ENCODE measurements at regions of chr2 and their contacts with region 1.

Region 1: GRCh38 chr2:37832590-37833197 is 92.4 kb upstream of the RMDN2 start:
- DNase-seq: peak; percentile 71 to 89 (median 80)
- ATAC-seq: peak; percentile 84
- H3K4me3 ChIP-seq: no peak overlapping the region
- H3K4me3 Mint-ChIP-seq: no peak overlapping the region
- H3K27ac ChIP-seq: no peak overlapping the region
- H3K27ac Mint-ChIP-seq: no peak overlapping the region
- H3K4me1 ChIP-seq: peaks cover 10% of the 10 kb centered on the region
- H3K4me1 Mint-ChIP-seq: peaks cover 19% of the 10 kb centered on the region
- H3K27me3 ChIP-seq: no peaks in the 10 kb centered on the region
- H3K27me3 Mint-ChIP-seq: no peaks in the 10 kb centered on the region
- CTCF ChIP-seq: peak; percentile 93

Region 2: DNA sequence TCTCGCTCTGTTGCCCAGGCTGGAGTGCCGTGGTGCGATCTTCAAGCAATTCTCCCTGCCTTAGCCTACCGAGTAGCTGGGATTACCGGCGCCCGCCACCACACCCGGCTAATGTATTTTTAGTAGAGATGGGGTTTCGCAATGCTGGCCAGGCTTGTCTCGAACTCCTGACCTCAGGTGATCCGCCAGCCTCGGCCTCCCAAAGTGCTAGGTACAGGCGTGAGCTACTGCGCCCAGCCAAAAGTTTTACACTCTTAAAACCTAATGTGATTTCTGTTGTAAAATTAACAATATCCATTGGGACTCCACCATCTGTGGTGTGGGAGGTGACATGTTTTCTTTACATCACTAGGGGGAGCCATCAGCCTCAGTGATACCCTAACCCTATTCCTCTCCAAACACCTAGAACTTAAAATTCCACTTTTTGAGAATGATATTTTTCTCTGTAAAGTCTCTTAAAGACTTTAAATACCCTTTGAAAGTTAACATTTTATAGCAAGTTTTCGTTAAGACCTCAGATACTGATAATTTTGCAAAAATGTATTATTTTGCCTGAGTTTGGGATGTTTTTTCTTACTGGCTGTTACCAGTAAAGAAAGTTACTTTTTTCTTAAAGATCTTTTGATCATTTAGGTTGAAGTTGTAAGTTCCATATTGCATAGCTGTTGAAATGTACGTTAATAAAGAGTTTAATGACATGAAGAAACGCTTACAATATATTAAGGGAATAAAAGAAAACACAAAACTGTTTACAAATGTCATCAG is 664.3 kb before region 1 on chr2:
- CTCF ChIA-PET with region 1: no interaction called
- POLR2A ChIA-PET with region 1: no interaction called
- intact Hi-C with region 1: loop called in 1 of 2 experiments (anchors 2 kb)
- DNase-seq: peak in 6 of 14 experiments; percentile 6 to 66 (median 46)
- ATAC-seq: peak; percentile 85
- H3K4me3 ChIP-seq: no peak overlapping the region
- H3K4me3 Mint-ChIP-seq: no peak overlapping the region
- H3K27ac ChIP-seq: no peak overlapping the region
- H3K27ac Mint-ChIP-seq: no peak overlapping the region
- H3K4me1 ChIP-seq: no peaks in the 10 kb centered on the region
- H3K4me1 Mint-ChIP-seq: no peaks in the 10 kb centered on the region
- H3K27me3 ChIP-seq: no peaks in the 10 kb centered on the region
- H3K27me3 Mint-ChIP-seq: no peaks in the 10 kb centered on the region
- CTCF ChIP-seq: peak; percentile 71

Region 3: DNA sequence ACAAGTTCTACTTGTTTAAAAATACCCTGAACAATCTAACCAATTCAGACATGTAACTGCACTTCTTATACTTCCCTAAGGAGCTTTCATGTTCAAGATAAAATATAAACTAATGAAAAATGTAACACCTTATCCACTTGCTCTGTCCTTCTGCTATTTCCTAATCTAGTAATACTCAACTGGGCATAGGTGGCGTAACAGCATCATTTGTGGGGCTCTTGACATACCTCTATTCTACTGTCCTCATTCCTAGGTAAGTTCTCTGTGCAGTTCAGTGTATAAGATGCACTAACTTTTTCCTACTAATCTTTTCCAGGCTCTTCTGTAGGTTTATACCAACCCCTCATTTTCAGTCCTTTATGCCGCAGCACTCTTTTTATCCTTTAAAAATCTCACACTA is 544.7 kb before region 1 on chr2:
- CTCF ChIA-PET with region 1: no interaction called
- POLR2A ChIA-PET with region 1: no interaction called
- intact Hi-C with region 1: loop called in 1 of 2 experiments (anchors 5 kb)
- DNase-seq: peak in 5 of 14 experiments; percentile 3 to 37 (median 19)
- ATAC-seq: no peak
- H3K4me3 ChIP-seq: no peak overlapping the region
- H3K4me3 Mint-ChIP-seq: no peak overlapping the region
- H3K27ac ChIP-seq: no peak overlapping the region
- H3K27ac Mint-ChIP-seq: no peak overlapping the region
- H3K4me1 ChIP-seq: no peaks in the 10 kb centered on the region
- H3K4me1 Mint-ChIP-seq: no peaks in the 10 kb centered on the region
- H3K27me3 ChIP-seq: no peaks in the 10 kb centered on the region
- H3K27me3 Mint-ChIP-seq: no peaks in the 10 kb centered on the region
- CTCF ChIP-seq: no peak

Region 4: GRCh38 chr2:37414470-37414949 is 418.2 kb before region 1 on chr2:
- CTCF ChIA-PET with region 1: interaction called, 84 read pairs
- POLR2A ChIA-PET with region 1: interaction called, 14 read pairs
- intact Hi-C with region 1: loop called (anchors 1 kb)
- DNase-seq: peak in 3 of 14 experiments; percentile 68 to 73 (median 71)
- ATAC-seq: peak; percentile 68
- H3K4me3 ChIP-seq: no peak overlapping the region
- H3K4me3 Mint-ChIP-seq: no peak overlapping the region
- H3K27ac ChIP-seq: no peak overlapping the region
- H3K27ac Mint-ChIP-seq: no peak overlapping the region
- H3K4me1 ChIP-seq: peaks cover 7% of the 10 kb centered on the region
- H3K4me1 Mint-ChIP-seq: peaks cover 13% of the 10 kb centered on the region
- H3K27me3 ChIP-seq: no peaks in the 10 kb centered on the region
- H3K27me3 Mint-ChIP-seq: no peaks in the 10 kb centered on the region
- CTCF ChIP-seq: peak; percentile 84

Region 5: GRCh38 chr2:37549598-37549997 is 283.1 kb before region 1 on chr2:
- CTCF ChIA-PET with region 1: interaction called, 5 read pairs
- POLR2A ChIA-PET with region 1: no interaction called
- intact Hi-C with region 1: loop called (anchors 1 to 5 kb)
- DNase-seq: no peak
- ATAC-seq: no peak
- H3K4me3 ChIP-seq: no peak overlapping the region
- H3K4me3 Mint-ChIP-seq: no peak overlapping the region
- H3K27ac ChIP-seq: no peak overlapping the region
- H3K27ac Mint-ChIP-seq: no peak overlapping the region
- H3K4me1 ChIP-seq: peaks cover 13% of the 10 kb centered on the region
- H3K4me1 Mint-ChIP-seq: peaks cover 11% of the 10 kb centered on the region
- H3K27me3 ChIP-seq: no peaks in the 10 kb centered on the region
- H3K27me3 Mint-ChIP-seq: no peaks in the 10 kb centered on the region
- CTCF ChIP-seq: no peak

Region 6: DNA sequence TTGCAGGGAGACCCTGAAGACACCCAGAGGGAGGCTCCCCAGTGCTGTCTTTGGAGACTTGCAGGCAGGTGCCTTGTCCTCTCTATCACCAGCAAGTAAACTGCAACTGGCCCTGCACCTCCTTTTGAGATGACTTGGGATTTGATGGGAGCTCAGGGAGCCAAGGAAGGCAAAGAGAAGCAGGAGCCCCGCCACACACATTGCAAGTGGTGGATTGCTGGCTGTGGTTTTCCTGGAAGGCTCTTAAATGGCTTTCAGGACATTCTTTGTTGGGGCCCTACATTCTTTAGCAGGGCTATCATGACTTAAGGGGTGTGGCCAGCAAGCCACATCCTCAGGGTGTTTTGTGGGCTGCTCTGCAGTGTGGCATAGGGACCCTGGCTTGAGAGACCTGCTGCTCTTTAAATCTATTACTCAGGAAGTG is 121.4 kb before region 1 on chr2:
- CTCF ChIA-PET with region 1: no interaction called
- POLR2A ChIA-PET with region 1: no interaction called
- intact Hi-C with region 1: loop called in 1 of 2 experiments (anchors 10 kb)
- DNase-seq: peak in 11 of 14 experiments; percentile 1 to 78 (median 14)
- ATAC-seq: peak; percentile 85
- H3K4me3 ChIP-seq: no peak overlapping the region
- H3K4me3 Mint-ChIP-seq: peak overlapping the region; percentile 9
- H3K27ac ChIP-seq: no peak overlapping the region
- H3K27ac Mint-ChIP-seq: peak overlapping the region; percentile 4
- H3K4me1 ChIP-seq: peaks cover 13% of the 10 kb centered on the region
- H3K4me1 Mint-ChIP-seq: peaks cover 65% of the 10 kb centered on the region
- H3K27me3 ChIP-seq: no peaks in the 10 kb centered on the region
- H3K27me3 Mint-ChIP-seq: no peaks in the 10 kb centered on the region
- CTCF ChIP-seq: no peak

Region 7: GRCh38 chr2:37877457-37878315 is 45.0 kb after region 1 on chr2:
- CTCF ChIA-PET with region 1: interaction called, 9 read pairs
- POLR2A ChIA-PET with region 1: no interaction called
- intact Hi-C with region 1: loop called (anchors 1 to 2 kb)
- DNase-seq: peak in 5 of 14 experiments; percentile 26 to 78 (median 71)
- ATAC-seq: peak; percentile 70
- H3K4me3 ChIP-seq: no peak overlapping the region
- H3K4me3 Mint-ChIP-seq: no peak overlapping the region
- H3K27ac ChIP-seq: no peak overlapping the region
- H3K27ac Mint-ChIP-seq: no peak overlapping the region
- H3K4me1 ChIP-seq: no peaks in the 10 kb centered on the region
- H3K4me1 Mint-ChIP-seq: no peaks in the 10 kb centered on the region
- H3K27me3 ChIP-seq: peaks cover 0 to 4% of the 10 kb centered on the region in 2 experiments
- H3K27me3 Mint-ChIP-seq: peaks cover 15% of the 10 kb centered on the region
- CTCF ChIP-seq: peak; percentile 90